ENCODE measurements at regions of chr18 and their contacts with region 1.

Region 1: DNA sequence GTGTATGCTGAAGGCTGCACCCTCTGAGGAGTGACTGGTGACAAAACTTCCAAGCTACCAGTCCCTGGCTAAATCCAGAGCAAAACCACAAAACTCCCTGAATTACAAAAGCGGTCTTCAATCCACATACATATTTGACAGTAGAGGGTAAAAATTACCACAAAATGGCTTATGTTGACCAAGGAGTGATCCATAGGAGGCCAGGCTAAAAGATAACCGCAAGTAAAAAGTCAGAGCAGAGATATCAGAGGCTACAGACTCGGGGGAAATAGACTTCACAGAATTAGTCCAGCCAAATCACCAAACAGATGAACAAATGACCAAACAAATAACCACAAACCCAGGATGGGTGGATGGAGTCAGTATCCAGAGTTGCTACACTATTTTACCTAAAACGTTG is 19.4 kb downstream of the STARD6 start:
- DNase-seq: no peak
- H3K4me3 ChIP-seq: no peak overlapping the region
- H3K27ac ChIP-seq: no peak overlapping the region
- H3K4me1 ChIP-seq: no peaks in the 10 kb centered on the region
- H3K27me3 ChIP-seq: no peaks in the 10 kb centered on the region
- CTCF ChIP-seq: no peak
- POLR2A ChIP-seq: no peak

Region 2: GRCh38 chr18:54327818-54328217 is 10.4 kb before region 1 on chr18:
- intact Hi-C with region 1: loop called (anchors 1 kb)
- DNase-seq: no peak
- H3K4me3 ChIP-seq: no peak overlapping the region
- H3K27ac ChIP-seq: no peak overlapping the region
- H3K4me1 ChIP-seq: no peaks in the 10 kb centered on the region
- H3K27me3 ChIP-seq: no peaks in the 10 kb centered on the region
- CTCF ChIP-seq: no peak
- POLR2A ChIP-seq: no peak

Region 3: DNA sequence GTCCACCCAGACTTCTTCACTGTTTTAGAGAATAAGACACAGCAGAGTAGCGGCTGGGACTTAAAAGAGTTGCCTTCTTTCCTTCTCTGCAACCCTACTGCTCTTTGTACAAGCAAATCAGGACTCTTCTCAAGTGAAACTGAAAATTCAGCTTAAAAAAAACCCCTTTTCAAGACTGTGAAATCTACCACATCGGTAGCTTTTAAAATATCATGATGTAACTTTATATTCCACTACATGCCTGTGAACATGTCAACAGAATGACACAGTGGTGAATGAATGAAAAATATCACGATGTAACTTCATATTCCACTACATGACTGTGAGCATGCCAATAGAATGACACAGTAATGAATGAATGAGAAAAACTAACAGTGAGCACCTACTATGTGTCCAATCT is 1196.3 kb after region 1 on chr18:
- intact Hi-C with region 1: no loop called
- DNase-seq: no peak
- H3K4me3 ChIP-seq: no peak overlapping the region
- H3K27ac ChIP-seq: no peak overlapping the region
- H3K4me1 ChIP-seq: no peaks in the 10 kb centered on the region
- H3K27me3 ChIP-seq: no peaks in the 10 kb centered on the region
- CTCF ChIP-seq: no peak
- POLR2A ChIP-seq: no peak